Mammary epithelial cell (primary cell): ENCODE measurements at regions of chr4 and their contacts with region 1.

Region 1: GRCh38 chr4:28225050-28225449 is 1364.4 kb downstream of the STIM2 start:
- DNase-seq: peak; percentile 52
- H3K4me3 ChIP-seq: no peak overlapping the region
- H3K27ac ChIP-seq: no peak overlapping the region
- H3K4me1 ChIP-seq: peaks cover 14% of the 10 kb centered on the region
- H3K27me3 ChIP-seq: no peaks in the 10 kb centered on the region
- CTCF ChIP-seq: peak; percentile 52 to 73

Region 2: GRCh38 chr4:27684610-27685011 is 540.4 kb before region 1 on chr4:
- CTCF ChIA-PET with region 1: no interaction called
- dilution Hi-C with region 1: no loop called
- in situ Hi-C with region 1: no loop called
- intact Hi-C with region 1: loop called (anchors 10 kb)
- DNase-seq: peak; percentile 60
- H3K4me3 ChIP-seq: no peak overlapping the region
- H3K27ac ChIP-seq: no peak overlapping the region
- H3K4me1 ChIP-seq: peaks cover 2% of the 10 kb centered on the region
- H3K27me3 ChIP-seq: peaks cover 3% of the 10 kb centered on the region
- CTCF ChIP-seq: peak; percentile 89 to 92

Region 3: GRCh38 chr4:28082686-28083390 is 142.2 kb before region 1 on chr4:
- CTCF ChIA-PET with region 1: no interaction called
- dilution Hi-C with region 1: no loop called
- in situ Hi-C with region 1: no loop called
- intact Hi-C with region 1: no loop called
- DNase-seq: peak; percentile 21
- H3K4me3 ChIP-seq: no peak overlapping the region
- H3K27ac ChIP-seq: no peak overlapping the region
- H3K4me1 ChIP-seq: peaks cover 5% of the 10 kb centered on the region
- H3K27me3 ChIP-seq: no peaks in the 10 kb centered on the region
- CTCF ChIP-seq: no peak

Region 4: DNA sequence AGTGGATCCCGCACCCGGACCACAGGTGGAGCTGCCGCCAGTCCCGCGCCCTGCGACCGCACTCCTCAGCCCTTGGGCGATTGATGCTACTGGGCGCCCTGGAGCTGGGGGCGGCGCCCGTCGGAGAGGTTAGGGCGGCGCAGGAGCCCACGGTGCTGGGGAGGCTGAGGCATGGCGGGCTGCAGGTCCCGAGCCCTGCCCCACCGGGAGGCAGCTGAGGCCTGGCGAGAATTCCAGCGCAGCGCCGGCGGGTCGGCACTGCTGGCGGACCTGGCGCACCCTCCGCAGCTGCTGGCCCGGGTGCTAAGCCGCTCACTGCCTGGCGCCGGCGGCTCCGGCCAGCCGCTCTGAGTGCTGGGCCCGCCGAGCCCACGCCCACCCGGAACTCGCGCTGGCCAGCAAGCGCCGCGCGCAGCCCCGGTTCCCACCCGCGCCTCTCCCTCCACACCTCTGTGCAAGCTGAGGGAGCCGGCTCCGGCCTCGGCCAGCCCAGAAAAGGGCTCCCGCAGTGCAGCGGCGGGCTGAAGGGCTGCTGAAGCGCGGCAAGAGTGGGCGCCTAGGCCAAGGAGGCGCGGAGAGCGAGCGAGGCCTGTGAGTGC is 107.9 kb before region 1 on chr4:
- CTCF ChIA-PET with region 1: no interaction called
- dilution Hi-C with region 1: no loop called
- in situ Hi-C with region 1: no loop called
- intact Hi-C with region 1: no loop called
- DNase-seq: no peak
- H3K4me3 ChIP-seq: no peak overlapping the region
- H3K27ac ChIP-seq: no peak overlapping the region
- H3K4me1 ChIP-seq: no peaks in the 10 kb centered on the region
- H3K27me3 ChIP-seq: no peaks in the 10 kb centered on the region
- CTCF ChIP-seq: no peak

Region 5: GRCh38 chr4:28287837-28288236 is 62.8 kb after region 1 on chr4:
- CTCF ChIA-PET with region 1: no interaction called
- dilution Hi-C with region 1: no loop called
- in situ Hi-C with region 1: no loop called
- intact Hi-C with region 1: loop called (anchors 1 kb)
- DNase-seq: peak; percentile 97
- H3K4me3 ChIP-seq: no peak overlapping the region
- H3K27ac ChIP-seq: peak overlapping the region; percentile 69
- H3K4me1 ChIP-seq: peaks cover 15% of the 10 kb centered on the region
- H3K27me3 ChIP-seq: no peaks in the 10 kb centered on the region
- CTCF ChIP-seq: no peak

Region 6: GRCh38 chr4:28350485-28350884 is 125.4 kb after region 1 on chr4:
- CTCF ChIA-PET with region 1: no interaction called
- dilution Hi-C with region 1: no loop called
- in situ Hi-C with region 1: no loop called
- intact Hi-C with region 1: loop called (anchors 5 kb)
- DNase-seq: peak; percentile 58
- H3K4me3 ChIP-seq: no peak overlapping the region
- H3K27ac ChIP-seq: no peak overlapping the region
- H3K4me1 ChIP-seq: peaks cover 12% of the 10 kb centered on the region
- H3K27me3 ChIP-seq: no peaks in the 10 kb centered on the region
- CTCF ChIP-seq: no peak

Region 7: DNA sequence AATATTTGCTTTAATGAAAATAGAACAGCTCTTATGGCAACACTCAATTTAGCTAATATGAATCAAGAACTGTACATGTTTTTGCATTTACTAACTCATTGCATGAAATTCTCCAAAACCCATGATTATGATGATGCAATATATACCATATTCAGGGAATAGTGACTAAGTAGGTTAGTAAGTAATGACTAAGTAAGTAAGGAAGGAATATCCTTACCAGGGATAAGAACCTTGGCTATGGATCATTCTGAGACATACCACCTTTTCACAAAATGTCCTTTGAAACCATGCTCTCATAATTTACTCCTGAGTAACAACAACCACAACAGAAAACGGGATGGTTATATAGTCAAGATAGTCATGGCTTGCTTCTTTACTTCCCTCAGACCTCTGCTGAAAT is 148.6 kb after region 1 on chr4:
- CTCF ChIA-PET with region 1: no interaction called
- dilution Hi-C with region 1: no loop called
- in situ Hi-C with region 1: no loop called
- intact Hi-C with region 1: loop called (anchors 5 kb)
- DNase-seq: peak; percentile 81
- H3K4me3 ChIP-seq: peak overlapping the region in 1 of 3 experiments; percentile 0
- H3K27ac ChIP-seq: peak overlapping the region; percentile 73
- H3K4me1 ChIP-seq: peaks cover 27% of the 10 kb centered on the region
- H3K27me3 ChIP-seq: no peaks in the 10 kb centered on the region
- CTCF ChIP-seq: no peak

Region 8: DNA sequence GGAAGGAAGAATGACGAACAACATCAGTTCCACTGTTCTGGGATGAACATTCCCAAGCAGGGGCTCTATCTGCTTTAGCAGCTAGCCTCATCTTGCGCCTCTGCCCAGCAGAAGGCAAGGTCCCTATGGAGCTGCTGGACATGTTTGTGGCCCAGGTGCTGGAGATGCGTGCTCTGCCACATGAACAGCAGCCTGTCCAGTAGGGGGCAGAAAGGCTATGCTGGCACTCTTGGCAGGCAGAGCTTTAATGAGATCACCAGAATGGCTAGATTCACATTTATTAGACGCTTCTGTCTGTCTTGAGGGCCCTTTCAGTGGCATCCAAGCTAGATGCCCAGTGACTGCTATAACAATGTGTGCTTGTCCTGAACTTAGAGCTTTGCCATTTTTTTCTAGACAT is 461.6 kb after region 1 on chr4:
- CTCF ChIA-PET with region 1: no interaction called
- dilution Hi-C with region 1: no loop called
- in situ Hi-C with region 1: no loop called
- intact Hi-C with region 1: loop called (anchors 10 kb)
- DNase-seq: peak; percentile 45
- H3K4me3 ChIP-seq: no peak overlapping the region
- H3K27ac ChIP-seq: no peak overlapping the region
- H3K4me1 ChIP-seq: no peaks in the 10 kb centered on the region
- H3K27me3 ChIP-seq: no peaks in the 10 kb centered on the region
- CTCF ChIP-seq: peak; percentile 69 to 71

Region 9: GRCh38 chr4:29081234-29081955 is 856.3 kb after region 1 on chr4:
- CTCF ChIA-PET with region 1: no interaction called
- dilution Hi-C with region 1: no loop called
- in situ Hi-C with region 1: no loop called
- intact Hi-C with region 1: loop called (anchors 10 kb)
- DNase-seq: no peak
- H3K4me3 ChIP-seq: no peak overlapping the region
- H3K27ac ChIP-seq: no peak overlapping the region
- H3K4me1 ChIP-seq: no peaks in the 10 kb centered on the region
- H3K27me3 ChIP-seq: no peaks in the 10 kb centered on the region
- CTCF ChIP-seq: peak in 1 of 2 donors; percentile 27